ENCODE measurements at regions of chrX and their contacts with region 1.

Region 1: GRCh38 chrX:24081661-24082264 is 27.0 kb downstream of the EIF2S3 start:
- DNase-seq: peak; percentile 7 to 54 (median 43)
- ATAC-seq: peak; percentile 75
- H3K4me3 ChIP-seq: no peak overlapping the region
- H3K4me3 Mint-ChIP-seq: peak overlapping the region in 2 of 10 donors; percentile 23 to 38
- H3K27ac ChIP-seq: no peak overlapping the region
- H3K27ac Mint-ChIP-seq: no peak overlapping the region
- H3K4me1 ChIP-seq: no peaks in the 10 kb centered on the region
- H3K4me1 Mint-ChIP-seq: peaks cover 0 to 11% (median 7%) of the 10 kb centered on the region in 7 donors
- H3K27me3 ChIP-seq: no peaks in the 10 kb centered on the region
- H3K27me3 Mint-ChIP-seq: no peaks in the 10 kb centered on the region

Region 2: GRCh38 chrX:23525531-23525930 is 556.2 kb before region 1 on chrX:
- CTCF ChIA-PET with region 1: no interaction called
- POLR2A ChIA-PET with region 1: no interaction called
- intact Hi-C with region 1: no loop called
- DNase-seq: no peak
- ATAC-seq: no peak
- H3K4me3 ChIP-seq: no peak overlapping the region
- H3K4me3 Mint-ChIP-seq: no peak overlapping the region
- H3K27ac ChIP-seq: no peak overlapping the region
- H3K27ac Mint-ChIP-seq: no peak overlapping the region
- H3K4me1 ChIP-seq: no peaks in the 10 kb centered on the region
- H3K4me1 Mint-ChIP-seq: no peaks in the 10 kb centered on the region
- H3K27me3 ChIP-seq: no peaks in the 10 kb centered on the region
- H3K27me3 Mint-ChIP-seq: peaks cover 0 to 20% (median 11%) of the 10 kb centered on the region in 5 donors

Region 3: DNA sequence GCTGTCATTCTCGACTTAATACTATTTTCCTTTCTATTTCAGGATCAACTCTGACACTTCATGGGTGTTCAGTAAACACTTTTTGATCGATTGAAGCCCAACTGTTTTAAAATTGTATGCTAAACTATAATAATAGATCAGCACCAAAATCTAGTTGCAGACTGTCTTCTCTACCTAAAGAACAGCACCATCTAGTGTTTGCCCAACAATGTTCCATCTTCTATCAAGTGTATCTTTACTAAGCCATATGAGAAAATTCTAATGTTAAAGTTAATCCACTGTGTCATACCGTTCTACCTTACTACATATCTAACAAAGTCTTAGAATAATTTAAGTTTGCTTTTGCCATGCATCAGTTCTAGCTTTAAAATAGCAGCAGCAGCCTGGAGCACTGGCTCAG is 527.5 kb before region 1 on chrX:
- CTCF ChIA-PET with region 1: no interaction called
- POLR2A ChIA-PET with region 1: no interaction called
- intact Hi-C with region 1: no loop called
- DNase-seq: no peak
- ATAC-seq: no peak
- H3K4me3 ChIP-seq: no peak overlapping the region
- H3K4me3 Mint-ChIP-seq: no peak overlapping the region
- H3K27ac ChIP-seq: no peak overlapping the region
- H3K27ac Mint-ChIP-seq: no peak overlapping the region
- H3K4me1 ChIP-seq: no peaks in the 10 kb centered on the region
- H3K4me1 Mint-ChIP-seq: no peaks in the 10 kb centered on the region
- H3K27me3 ChIP-seq: no peaks in the 10 kb centered on the region
- H3K27me3 Mint-ChIP-seq: peaks cover 0 to 11% (median 5%) of the 10 kb centered on the region in 5 donors

Region 4: GRCh38 chrX:24241822-24242648 is 160.3 kb after region 1 on chrX:
- CTCF ChIA-PET with region 1: no interaction called
- POLR2A ChIA-PET with region 1: no interaction called
- intact Hi-C with region 1: loop called in 1 of 2 experiments (anchors 1 kb)
- DNase-seq: peak in 5 of 9 donors; percentile 4 to 41 (median 28)
- ATAC-seq: peak; percentile 38
- H3K4me3 ChIP-seq: no peak overlapping the region
- H3K4me3 Mint-ChIP-seq: no peak overlapping the region
- H3K27ac ChIP-seq: no peak overlapping the region
- H3K27ac Mint-ChIP-seq: peak overlapping the region in 1 of 9 donors; percentile 8
- H3K4me1 ChIP-seq: no peaks in the 10 kb centered on the region
- H3K4me1 Mint-ChIP-seq: peaks cover 0 to 4% (median 0%) of the 10 kb centered on the region in 7 donors
- H3K27me3 ChIP-seq: no peaks in the 10 kb centered on the region
- H3K27me3 Mint-ChIP-seq: peaks cover 0 to 2% (median 0%) of the 10 kb centered on the region in 5 donors

Region 5: GRCh38 chrX:24920769-24921168 is 839.0 kb after region 1 on chrX:
- CTCF ChIA-PET with region 1: no interaction called
- POLR2A ChIA-PET with region 1: no interaction called
- intact Hi-C with region 1: no loop called
- DNase-seq: no peak
- ATAC-seq: no peak
- H3K4me3 ChIP-seq: no peak overlapping the region
- H3K4me3 Mint-ChIP-seq: no peak overlapping the region
- H3K27ac ChIP-seq: no peak overlapping the region
- H3K27ac Mint-ChIP-seq: no peak overlapping the region
- H3K4me1 ChIP-seq: no peaks in the 10 kb centered on the region
- H3K4me1 Mint-ChIP-seq: peaks cover 0 to 2% (median 0%) of the 10 kb centered on the region in 7 donors
- H3K27me3 ChIP-seq: no peaks in the 10 kb centered on the region
- H3K27me3 Mint-ChIP-seq: no peaks in the 10 kb centered on the region